Mammary epithelial cell (primary cell): ENCODE measurements at regions of chr17 and their contacts with region 1.

Region 1: GRCh38 chr17:17978481-17979424 is 6.1 kb downstream of the DRC3 start:
- DNase-seq: no peak
- H3K4me3 ChIP-seq: no peak overlapping the region
- H3K27ac ChIP-seq: no peak overlapping the region
- H3K4me1 ChIP-seq: peaks cover 8% of the 10 kb centered on the region
- H3K27me3 ChIP-seq: no peaks in the 10 kb centered on the region
- CTCF ChIP-seq: no peak

Region 2: DNA sequence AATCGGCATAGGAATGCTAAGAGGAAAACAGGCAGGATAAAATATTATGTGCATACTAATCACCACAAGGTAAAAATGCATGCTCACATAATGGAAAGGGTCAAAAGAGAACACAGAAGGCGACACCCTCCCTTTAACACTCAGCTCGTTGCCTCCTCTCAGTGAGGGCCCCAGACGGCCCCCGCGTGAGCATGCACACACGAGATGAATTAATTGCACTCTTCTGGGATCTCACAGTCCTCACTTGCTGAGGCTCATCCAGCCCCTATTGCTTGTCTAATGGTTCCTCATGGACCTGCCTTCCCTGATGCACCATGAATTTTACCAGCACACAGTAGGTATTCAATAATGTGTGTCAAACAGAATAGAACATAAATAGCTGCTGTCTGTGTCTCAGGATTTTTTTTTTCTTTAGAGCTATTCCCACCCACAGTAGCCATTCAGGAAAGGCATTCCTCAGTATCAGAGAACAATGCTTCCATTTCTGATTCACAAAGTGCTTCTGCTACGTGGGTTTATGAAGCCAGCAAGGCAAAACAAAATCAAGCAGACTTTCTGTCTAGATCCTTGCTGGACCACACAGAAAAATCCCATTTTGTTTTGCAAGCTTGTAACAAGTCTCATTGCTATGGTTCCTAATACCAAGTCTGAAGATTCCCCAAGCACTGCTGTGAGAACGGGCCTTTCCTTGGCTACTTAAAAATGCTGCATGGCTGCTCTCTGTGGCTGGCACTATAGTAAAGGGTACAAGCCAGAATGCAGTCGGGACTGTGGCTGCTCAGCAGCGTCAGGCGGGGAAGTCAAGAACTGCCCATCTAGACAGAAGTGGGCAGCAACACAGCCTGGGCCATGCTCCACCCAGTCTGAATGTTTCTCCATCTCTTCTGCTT is 50.1 kb before region 1 on chr17:
- CTCF ChIA-PET with region 1: no interaction called
- dilution Hi-C with region 1: loop called (anchors 5 kb)
- in situ Hi-C with region 1: no loop called
- intact Hi-C with region 1: no loop called
- DNase-seq: no peak
- H3K4me3 ChIP-seq: no peak overlapping the region
- H3K27ac ChIP-seq: no peak overlapping the region
- H3K4me1 ChIP-seq: peaks cover 18% of the 10 kb centered on the region
- H3K27me3 ChIP-seq: no peaks in the 10 kb centered on the region
- CTCF ChIP-seq: no peak

Region 3: DNA sequence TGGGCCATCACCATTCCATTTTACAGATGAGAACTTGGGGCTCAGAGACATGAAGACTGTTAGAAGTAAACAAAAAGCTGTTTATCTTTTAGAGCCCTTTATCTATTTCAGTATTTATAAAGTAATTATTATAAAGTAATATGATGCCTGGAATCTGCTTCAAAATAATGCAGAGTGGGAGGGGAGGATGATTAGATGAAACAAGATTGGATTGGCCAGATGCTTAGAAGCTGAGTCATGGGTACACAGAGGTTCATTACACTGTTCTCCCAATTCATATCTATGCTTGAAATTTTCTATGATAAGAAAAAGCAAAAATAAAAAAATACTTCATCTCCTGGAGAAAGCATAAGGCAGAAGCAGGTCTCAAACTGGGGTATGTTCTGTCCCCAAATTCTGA is 35.9 kb before region 1 on chr17:
- CTCF ChIA-PET with region 1: no interaction called
- dilution Hi-C with region 1: no loop called
- in situ Hi-C with region 1: no loop called
- intact Hi-C with region 1: no loop called
- DNase-seq: peak; percentile 46
- H3K4me3 ChIP-seq: no peak overlapping the region
- H3K27ac ChIP-seq: peak overlapping the region; percentile 38
- H3K4me1 ChIP-seq: peaks cover 48% of the 10 kb centered on the region
- H3K27me3 ChIP-seq: no peaks in the 10 kb centered on the region
- CTCF ChIP-seq: no peak

Region 4: GRCh38 chr17:18056212-18056611 is 77.5 kb after region 1 on chr17:
- CTCF ChIA-PET with region 1: no interaction called
- dilution Hi-C with region 1: no loop called
- in situ Hi-C with region 1: no loop called
- intact Hi-C with region 1: no loop called
- DNase-seq: no peak
- H3K4me3 ChIP-seq: no peak overlapping the region
- H3K27ac ChIP-seq: no peak overlapping the region
- H3K4me1 ChIP-seq: peaks cover 12% of the 10 kb centered on the region
- H3K27me3 ChIP-seq: no peaks in the 10 kb centered on the region
- CTCF ChIP-seq: no peak